AG04449 (cell line): ENCODE measurements at regions of chr11 and their contacts with region 1.

Region 1: GRCh38 chr11:117426269-117426685 is 98.6 kb downstream of the CEP164 start:
- DNase-seq: no peak
- H3K4me3 ChIP-seq: no peak overlapping the region
- CTCF ChIP-seq: peak; percentile 96

Region 2: GRCh38 chr11:117395476-117396155 is 30.7 kb before region 1 on chr11:
- CTCF ChIA-PET with region 1: interaction called, 13 read pairs
- POLR2A ChIA-PET with region 1: no interaction called
- DNase-seq: no peak
- H3K4me3 ChIP-seq: no peak overlapping the region
- CTCF ChIP-seq: no peak

Region 3: DNA sequence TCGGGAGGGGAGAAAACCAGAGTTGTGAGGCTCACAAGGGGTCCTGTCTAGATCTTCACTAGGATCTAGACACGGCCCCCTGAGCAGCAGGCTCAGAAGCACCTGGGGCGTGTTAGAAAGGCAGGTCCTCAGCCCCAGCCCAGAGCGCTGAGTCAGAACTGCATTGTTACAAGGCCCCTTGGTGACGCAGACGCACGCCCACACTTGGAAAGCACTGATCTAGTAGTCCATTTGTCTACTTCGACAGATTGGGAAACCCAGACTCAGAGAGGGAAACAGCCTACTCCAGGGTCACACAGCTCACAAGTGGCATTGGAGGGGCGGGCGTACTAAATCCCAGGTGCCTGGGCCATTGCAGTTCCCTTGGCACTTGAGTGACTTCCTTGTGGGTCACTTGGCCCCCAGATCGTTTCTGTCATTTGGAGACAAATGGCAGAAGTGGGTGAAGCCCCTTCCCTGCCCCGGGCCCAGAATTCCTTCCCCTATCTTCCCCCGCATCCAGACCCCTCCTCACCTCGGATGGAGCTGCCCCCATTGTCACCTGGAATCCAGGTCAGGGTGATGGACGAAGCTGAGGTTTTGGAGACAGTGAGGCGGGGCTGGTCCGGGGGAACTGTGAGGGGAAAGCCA is 12.2 kb after region 1 on chr11:
- CTCF ChIA-PET with region 1: interaction called, 26 read pairs
- POLR2A ChIA-PET with region 1: no interaction called
- DNase-seq: no peak
- H3K4me3 ChIP-seq: no peak overlapping the region
- CTCF ChIP-seq: no peak

Region 4: GRCh38 chr11:117449111-117449693 is 22.9 kb after region 1 on chr11:
- CTCF ChIA-PET with region 1: interaction called, 26 read pairs
- POLR2A ChIA-PET with region 1: no interaction called
- DNase-seq: no peak
- H3K4me3 ChIP-seq: no peak overlapping the region
- CTCF ChIP-seq: no peak

Region 5: GRCh38 chr11:117807482-117808327 is 381.4 kb after region 1 on chr11:
- CTCF ChIA-PET with region 1: interaction called, 55 read pairs
- POLR2A ChIA-PET with region 1: no interaction called
- DNase-seq: no peak
- H3K4me3 ChIP-seq: no peak overlapping the region
- CTCF ChIP-seq: peak; percentile 82

Region 6: DNA sequence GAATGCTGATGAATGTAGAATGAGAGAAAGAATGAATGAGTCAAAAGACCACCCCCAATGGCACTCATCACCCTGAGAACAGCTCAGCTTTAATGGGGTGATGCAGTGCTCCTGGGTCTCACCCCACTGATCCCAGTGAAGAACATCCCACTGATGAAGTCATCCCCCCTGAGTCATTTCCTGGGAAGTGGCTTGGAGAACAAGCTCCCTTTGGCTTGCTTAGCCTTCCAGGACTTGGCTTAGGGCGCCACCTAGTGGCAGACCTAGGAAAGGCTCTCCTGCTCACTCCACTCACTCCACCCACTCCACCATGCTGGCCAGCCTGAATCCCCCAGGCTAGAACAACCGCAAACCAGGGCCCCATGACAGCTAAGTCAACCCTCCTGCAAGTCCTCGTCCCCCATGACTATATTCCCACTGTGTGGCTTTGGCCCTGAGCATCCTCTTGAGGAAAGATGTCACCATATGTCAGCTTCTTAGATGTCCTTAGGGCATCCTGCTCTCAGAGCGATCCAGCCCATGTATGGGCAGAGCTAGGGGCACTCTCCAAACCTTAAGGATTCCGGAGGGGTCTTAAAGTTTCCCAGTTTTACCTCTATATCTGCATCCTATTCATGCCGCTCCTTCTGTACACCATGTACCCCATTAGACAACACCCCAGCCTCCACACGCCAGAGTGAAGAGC is 520.7 kb after region 1 on chr11:
- CTCF ChIA-PET with region 1: interaction called, 16 read pairs
- POLR2A ChIA-PET with region 1: no interaction called
- DNase-seq: peak; percentile 54
- H3K4me3 ChIP-seq: no peak overlapping the region
- CTCF ChIP-seq: peak; percentile 92